ENCODE measurements at regions of chr18 and their contacts with region 1.

Region 1: GRCh38 chr18:8800449-8800848 is 95.1 kb downstream of the MTCL1 start:
- DNase-seq: peak; percentile 100
- ATAC-seq: peak; percentile 75
- H3K4me3 ChIP-seq: peak overlapping the region; percentile 1; the same call in 1 of the 2 replicates
- H3K27ac ChIP-seq: peak overlapping the region; percentile 95
- H3K4me1 ChIP-seq: peaks cover 43% of the 10 kb centered on the region
- H3K27me3 ChIP-seq: no peaks in the 10 kb centered on the region
- CTCF ChIP-seq: no peak
- POLR2A ChIP-seq: peak; percentile 68
- RAD21 ChIP-seq: peak; percentile 21; the same call in 1 of the 2 replicates

Region 2: DNA sequence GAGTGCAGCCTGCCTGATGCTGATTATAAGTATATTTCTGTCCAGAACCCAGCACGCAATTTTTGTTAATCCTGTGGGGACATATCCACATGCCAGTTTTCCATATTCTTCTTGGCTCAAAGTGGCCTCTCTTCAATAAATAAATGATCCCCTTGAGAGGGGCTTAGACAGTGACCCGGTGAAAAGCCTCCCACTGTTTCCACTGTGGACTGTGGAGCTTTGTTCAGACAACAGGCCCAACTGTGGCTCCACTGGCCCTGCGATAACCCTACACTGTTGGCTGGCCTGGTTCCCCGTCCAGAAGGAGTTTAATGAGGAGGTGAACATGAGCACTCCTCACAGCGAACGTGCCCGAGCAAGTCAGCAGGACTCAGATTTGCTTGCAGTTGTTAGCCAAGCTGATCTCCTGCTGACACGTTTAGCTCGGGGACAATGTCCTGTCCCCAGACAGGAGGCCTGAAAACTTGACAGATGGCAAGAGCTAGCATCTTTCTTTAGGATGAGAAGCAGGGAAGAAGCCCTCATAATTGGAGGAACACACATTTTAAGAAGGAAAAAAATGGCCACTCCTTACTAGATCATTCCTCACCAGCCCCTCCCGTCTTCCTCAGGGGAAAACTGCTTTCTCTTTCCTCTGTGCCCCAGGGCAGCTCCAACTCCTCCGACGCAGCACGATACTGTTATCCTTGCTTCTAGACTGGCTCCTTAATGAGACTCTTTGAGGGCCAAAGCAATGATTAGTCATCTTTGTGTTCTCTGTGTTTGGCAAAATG is 115.1 kb before region 1 on chr18:
- CTCF ChIA-PET with region 1: no interaction called
- POLR2A ChIA-PET with region 1: no interaction called
- dilution Hi-C with region 1: no loop called
- in situ Hi-C with region 1: no loop called
- intact Hi-C with region 1: no loop called
- DNase-seq: peak; percentile 32
- ATAC-seq: peak; percentile 67
- H3K4me3 ChIP-seq: no peak overlapping the region
- H3K27ac ChIP-seq: no peak overlapping the region
- H3K4me1 ChIP-seq: peaks cover 9% of the 10 kb centered on the region
- H3K27me3 ChIP-seq: no peaks in the 10 kb centered on the region
- CTCF ChIP-seq: no peak
- POLR2A ChIP-seq: no peak
- RAD21 ChIP-seq: no peak

Region 3: DNA sequence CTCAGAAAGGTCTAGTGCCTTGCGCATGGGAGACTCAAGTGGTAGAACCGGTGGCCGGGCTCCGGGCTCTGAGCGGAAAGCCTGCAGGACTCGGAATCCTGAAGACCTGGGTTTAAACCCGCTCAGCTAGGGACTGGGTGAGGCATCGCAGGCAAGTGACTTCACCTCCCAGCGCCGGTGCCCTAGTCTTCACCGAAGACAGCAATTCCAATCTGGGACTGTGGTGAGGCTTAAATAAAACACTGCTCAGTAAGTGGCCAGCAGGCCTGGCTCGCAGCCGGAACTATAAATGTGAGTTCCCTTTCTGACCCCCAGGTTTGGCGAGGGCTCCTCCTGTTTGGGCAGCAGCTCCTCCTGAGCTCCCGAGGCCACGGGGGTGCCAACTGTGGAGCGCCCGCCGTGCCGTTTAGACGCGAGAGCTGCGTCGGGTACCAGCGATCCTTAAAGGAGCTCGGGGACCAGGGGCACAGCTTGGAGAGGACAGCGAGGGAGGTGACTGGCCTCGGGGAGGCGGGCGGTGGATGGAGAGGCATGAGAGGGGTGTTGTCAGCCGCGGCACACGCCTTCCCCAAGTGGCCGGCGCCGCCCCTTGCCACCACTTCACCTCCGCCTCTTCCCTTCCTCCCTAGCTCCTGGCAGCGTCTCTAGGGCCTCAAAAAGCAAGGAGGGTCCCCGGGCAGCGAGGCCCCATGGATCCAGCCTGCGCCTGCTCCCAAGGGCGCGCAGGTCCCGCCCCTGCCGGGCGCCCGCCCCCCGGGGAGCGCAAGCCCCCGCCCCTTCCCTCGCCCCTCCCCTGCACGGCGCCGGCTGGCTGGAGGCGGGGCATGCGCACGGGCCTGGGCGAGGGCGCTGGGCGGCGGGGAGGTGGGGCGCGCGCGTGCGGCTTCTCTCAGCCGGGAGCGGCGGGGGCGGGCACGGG is 95.8 kb before region 1 on chr18:
- CTCF ChIA-PET with region 1: interaction called, 5 read pairs
- POLR2A ChIA-PET with region 1: interaction called, 6 read pairs
- dilution Hi-C with region 1: no loop called
- in situ Hi-C with region 1: loop called (anchors 5 kb)
- intact Hi-C with region 1: loop called (anchors 1 kb)
- DNase-seq: peak; percentile 88
- ATAC-seq: peak; percentile 88
- H3K4me3 ChIP-seq: peak overlapping the region; percentile 93
- H3K27ac ChIP-seq: peak overlapping the region; percentile 91
- H3K4me1 ChIP-seq: peaks cover 26% of the 10 kb centered on the region
- H3K27me3 ChIP-seq: no peaks in the 10 kb centered on the region
- CTCF ChIP-seq: no peak
- POLR2A ChIP-seq: 0 out of 2 replicates have a peak, but pooled peaks have one; percentile 36
- RAD21 ChIP-seq: no peak

Region 4: GRCh38 chr18:8948471-8949149 is 148.2 kb after region 1 on chr18:
- CTCF ChIA-PET with region 1: interaction called, 3 read pairs
- POLR2A ChIA-PET with region 1: interaction called, 3 read pairs
- dilution Hi-C with region 1: no loop called
- in situ Hi-C with region 1: no loop called
- intact Hi-C with region 1: loop called (anchors 1 kb)
- DNase-seq: peak; percentile 93
- ATAC-seq: peak; percentile 81
- H3K4me3 ChIP-seq: no peak overlapping the region
- H3K27ac ChIP-seq: peak overlapping the region; percentile 95
- H3K4me1 ChIP-seq: peaks cover 32% of the 10 kb centered on the region
- H3K27me3 ChIP-seq: no peaks in the 10 kb centered on the region
- CTCF ChIP-seq: no peak
- POLR2A ChIP-seq: no peak
- RAD21 ChIP-seq: peak; percentile 12; the same call in 1 of the 2 replicates

Region 5: GRCh38 chr18:9055185-9055584 is 254.7 kb after region 1 on chr18:
- CTCF ChIA-PET with region 1: interaction called, 4 read pairs
- POLR2A ChIA-PET with region 1: no interaction called
- dilution Hi-C with region 1: no loop called
- in situ Hi-C with region 1: no loop called
- intact Hi-C with region 1: loop called (anchors 10 kb)
- DNase-seq: peak; percentile 86
- ATAC-seq: peak; percentile 83
- H3K4me3 ChIP-seq: no peak overlapping the region
- H3K27ac ChIP-seq: no peak overlapping the region
- H3K4me1 ChIP-seq: peaks cover 3% of the 10 kb centered on the region; the same call in 1 of the 2 replicates
- H3K27me3 ChIP-seq: no peaks in the 10 kb centered on the region
- CTCF ChIP-seq: peak; percentile 58
- POLR2A ChIP-seq: no peak
- RAD21 ChIP-seq: peak; percentile 62